Activated T-helper 1 cell treated with anti-CD3 and anti-CD28 coated beads, Interleukin-12 subunit alpha, Interleukin-12 subunit beta, Interleukin-2, Interleukin-4 antibody, amounts not matched to agents 30 ng/mL and 10 ng/mL and 1 ng/mL, durations not matched to agents 14 hours and 24 hours and 36 hours (primary cell): ENCODE measurements at regions of chr6 and their contacts with region 1.

Region 1: GRCh38 chr6:83884523-83884922 is 25.0 kb downstream of the CYB5R4 start:
- DNase-seq: no peak
- H3K4me3 Mint-ChIP-seq: no peak overlapping the region
- H3K27ac Mint-ChIP-seq: no peak overlapping the region
- H3K4me1 Mint-ChIP-seq: peaks cover 7% of the 10 kb centered on the region
- H3K27me3 Mint-ChIP-seq: no peaks in the 10 kb centered on the region

Region 2: GRCh38 chr6:83859410-83860358 is 24.8 kb before region 1 on chr6 and contains the start of gene CYB5R4:
- intact Hi-C with region 1: loop called (anchors 1 kb)
- DNase-seq: peak; percentile 91
- H3K4me3 Mint-ChIP-seq: peak within 1 kb of the TSS; percentile 99
- H3K27ac Mint-ChIP-seq: peak within 1 kb of the TSS; percentile 90
- H3K4me1 Mint-ChIP-seq: peaks cover 33% of the 10 kb centered on the region
- H3K27me3 Mint-ChIP-seq: peaks cover 11% of the 10 kb centered on the region
- total RNA-seq, gene CYB5R4: 24.5 and 25.3 TPM in 2 replicates

Region 3: DNA sequence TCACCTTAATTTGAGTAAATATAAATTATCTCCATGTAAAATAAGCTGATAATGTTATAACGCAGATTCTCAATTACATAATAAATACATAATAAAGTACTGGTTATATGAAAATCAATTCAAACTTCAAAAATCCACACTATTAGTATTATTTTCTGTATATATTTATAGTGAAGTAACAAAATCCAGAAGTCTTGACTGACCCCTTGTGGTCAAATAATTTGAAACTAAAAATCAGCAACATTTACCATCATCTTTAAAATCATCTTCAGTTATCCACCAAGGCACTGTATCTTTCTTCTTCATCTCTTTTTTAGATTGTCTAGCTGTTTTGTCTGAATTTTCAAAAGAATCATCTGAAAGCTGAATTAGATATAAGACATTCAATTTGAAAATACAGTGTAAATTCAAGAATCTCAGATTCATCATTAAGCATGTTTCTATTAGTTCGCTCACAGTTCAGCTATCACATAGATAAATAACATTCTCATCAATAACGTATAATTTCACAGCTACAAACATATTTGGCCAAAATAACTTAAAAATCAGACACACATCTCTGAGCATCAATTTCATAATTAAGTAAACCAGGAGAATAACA is 336.4 kb after region 1 on chr6:
- intact Hi-C with region 1: loop called (anchors 1 kb)
- DNase-seq: no peak
- H3K4me3 Mint-ChIP-seq: no peak overlapping the region
- H3K27ac Mint-ChIP-seq: no peak overlapping the region
- H3K4me1 Mint-ChIP-seq: no peaks in the 10 kb centered on the region
- H3K27me3 Mint-ChIP-seq: no peaks in the 10 kb centered on the region

Region 4: DNA sequence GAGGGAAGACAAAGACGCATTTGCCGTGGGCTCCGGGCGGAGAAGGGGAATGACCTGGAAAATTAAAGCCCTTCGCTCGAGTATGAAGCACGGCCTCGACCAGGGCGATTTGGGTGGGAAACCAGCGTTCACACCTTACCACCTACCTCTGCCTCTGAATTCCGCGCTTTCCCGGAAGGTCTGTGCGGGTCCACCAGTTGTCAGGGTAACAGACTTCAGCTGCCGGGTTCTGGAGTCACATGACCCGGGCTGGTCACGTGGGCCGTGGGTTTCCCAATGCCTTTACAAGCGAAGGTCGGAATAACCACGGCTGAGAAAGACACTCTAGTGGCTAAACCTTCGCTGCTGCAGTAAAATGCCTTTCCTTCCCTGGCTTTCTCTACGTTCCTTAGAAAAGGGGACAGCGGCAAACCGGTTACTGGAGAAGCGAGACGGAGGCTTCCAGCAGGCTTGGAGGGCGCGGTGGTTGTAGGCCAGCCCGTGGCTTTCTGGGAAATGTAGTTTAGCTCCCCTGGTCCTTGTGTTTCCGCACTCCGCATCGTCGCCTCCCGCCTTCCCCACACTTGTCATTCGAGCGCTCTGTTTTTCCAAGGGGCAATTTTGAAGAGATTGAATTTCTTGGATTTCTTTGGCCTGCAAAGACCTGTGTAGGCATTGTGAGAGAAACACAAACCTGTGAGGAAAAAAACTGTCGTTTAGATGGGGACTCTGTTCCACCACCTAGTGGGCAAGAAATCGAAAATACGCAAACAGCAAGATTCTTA is 343.1 kb after region 1 on chr6 and contains the start of gene CEP162:
- intact Hi-C with region 1: loop called (anchors 1 kb)
- DNase-seq: peak; percentile 83
- H3K4me3 Mint-ChIP-seq: peak within 1 kb of the TSS; percentile 98
- H3K27ac Mint-ChIP-seq: peak within 1 kb of the TSS; percentile 86
- H3K4me1 Mint-ChIP-seq: peaks cover 10% of the 10 kb centered on the region
- H3K27me3 Mint-ChIP-seq: peaks cover 5% of the 10 kb centered on the region
- total RNA-seq, gene CEP162: 4.7 and 6.1 TPM in 2 replicates

Region 5: DNA sequence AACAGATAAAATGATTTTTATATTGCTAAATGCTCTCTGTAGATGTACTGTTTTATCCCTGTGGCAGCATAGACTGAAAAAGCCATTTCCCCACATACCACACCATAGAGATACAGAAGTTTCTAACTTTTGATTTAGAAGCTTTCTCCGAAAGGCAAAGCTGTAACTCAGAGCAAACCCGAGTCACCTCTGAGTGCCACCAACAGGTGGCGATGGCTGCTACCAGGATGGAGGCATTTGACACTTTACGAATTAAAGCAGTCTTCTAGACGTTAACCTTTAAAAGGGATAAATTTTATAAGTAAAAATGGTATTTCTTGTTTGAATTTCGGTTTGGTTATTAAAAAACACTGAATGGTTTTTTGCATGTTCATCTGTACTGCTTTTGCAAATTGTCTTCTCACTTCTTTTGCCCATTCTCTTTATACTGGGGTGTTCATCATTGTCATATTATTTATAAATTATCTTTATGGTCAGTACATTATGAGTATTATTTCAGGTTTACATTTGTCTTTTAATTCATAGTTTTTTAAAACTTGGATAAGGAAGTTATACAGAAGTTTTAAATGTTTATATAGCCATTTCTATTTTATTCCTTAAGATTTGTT is 543.9 kb after region 1 on chr6:
- intact Hi-C with region 1: loop called (anchors 10 kb)
- DNase-seq: no peak
- H3K4me3 Mint-ChIP-seq: no peak overlapping the region
- H3K27ac Mint-ChIP-seq: no peak overlapping the region
- H3K4me1 Mint-ChIP-seq: no peaks in the 10 kb centered on the region
- H3K27me3 Mint-ChIP-seq: peaks cover 3% of the 10 kb centered on the region

Region 6: DNA sequence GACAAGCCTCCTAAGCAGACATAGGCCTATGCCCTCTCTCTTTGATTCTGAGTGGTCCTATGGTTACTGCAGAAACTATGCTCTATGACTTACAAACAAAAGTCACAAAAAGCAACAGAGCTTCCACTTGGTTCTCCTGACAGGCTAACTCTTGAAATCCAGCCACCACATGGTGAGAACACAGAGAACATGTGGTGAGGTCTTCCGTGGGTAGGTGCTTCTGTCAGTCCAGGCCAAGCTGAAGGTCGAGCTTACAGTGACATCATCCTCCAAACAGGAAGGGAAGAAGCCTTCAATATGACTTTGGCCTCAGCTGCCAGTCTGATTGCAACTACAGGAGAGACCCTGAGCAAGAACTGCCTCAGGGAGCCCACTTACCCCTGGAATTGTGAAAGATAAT is 614.4 kb after region 1 on chr6:
- intact Hi-C with region 1: no loop called
- DNase-seq: no peak
- H3K4me3 Mint-ChIP-seq: no peak overlapping the region
- H3K27ac Mint-ChIP-seq: no peak overlapping the region
- H3K4me1 Mint-ChIP-seq: no peaks in the 10 kb centered on the region
- H3K27me3 Mint-ChIP-seq: no peaks in the 10 kb centered on the region

Region 7: DNA sequence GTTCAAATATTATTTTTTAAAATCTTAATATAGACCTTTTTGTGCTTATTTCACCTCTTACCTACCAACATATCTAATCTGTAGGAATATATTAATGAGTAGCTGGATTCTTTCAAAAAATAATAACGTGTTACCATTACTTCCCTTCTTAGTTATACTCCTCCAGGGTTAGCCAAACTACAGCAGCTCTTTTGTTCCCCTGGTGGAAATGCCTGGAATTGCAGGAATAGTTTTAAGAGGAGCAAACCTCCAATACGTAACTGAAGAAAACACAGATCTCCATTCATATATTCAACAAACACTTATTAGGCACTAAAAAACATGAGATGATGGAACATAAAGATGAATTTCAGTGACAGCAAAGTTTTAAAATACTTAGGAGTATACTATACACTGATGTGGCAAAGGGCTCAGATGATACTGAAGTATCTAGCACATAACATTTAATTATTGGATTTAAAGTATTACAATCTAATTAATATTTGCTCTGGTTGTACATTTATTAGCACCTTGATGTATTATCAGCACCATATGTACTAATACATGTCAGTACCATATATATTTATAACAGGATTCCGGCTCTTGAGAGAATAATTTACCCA is 801.6 kb after region 1 on chr6:
- intact Hi-C with region 1: loop called (anchors 5 kb)
- DNase-seq: no peak
- H3K4me3 Mint-ChIP-seq: no peak overlapping the region
- H3K27ac Mint-ChIP-seq: no peak overlapping the region
- H3K4me1 Mint-ChIP-seq: no peaks in the 10 kb centered on the region
- H3K27me3 Mint-ChIP-seq: peaks cover 2% of the 10 kb centered on the region

Region 8: GRCh38 chr6:85323435-85324040 is 1439.0 kb after region 1 on chr6:
- intact Hi-C with region 1: loop called (anchors 1 kb)
- DNase-seq: peak; percentile 51
- H3K4me3 Mint-ChIP-seq: no peak overlapping the region
- H3K27ac Mint-ChIP-seq: no peak overlapping the region
- H3K4me1 Mint-ChIP-seq: no peaks in the 10 kb centered on the region
- H3K27me3 Mint-ChIP-seq: peaks cover 3% of the 10 kb centered on the region